CD4-positive, alpha-beta T cell (primary cell): ENCODE measurements at regions of chr15 and their contacts with region 1.

Region 1: DNA sequence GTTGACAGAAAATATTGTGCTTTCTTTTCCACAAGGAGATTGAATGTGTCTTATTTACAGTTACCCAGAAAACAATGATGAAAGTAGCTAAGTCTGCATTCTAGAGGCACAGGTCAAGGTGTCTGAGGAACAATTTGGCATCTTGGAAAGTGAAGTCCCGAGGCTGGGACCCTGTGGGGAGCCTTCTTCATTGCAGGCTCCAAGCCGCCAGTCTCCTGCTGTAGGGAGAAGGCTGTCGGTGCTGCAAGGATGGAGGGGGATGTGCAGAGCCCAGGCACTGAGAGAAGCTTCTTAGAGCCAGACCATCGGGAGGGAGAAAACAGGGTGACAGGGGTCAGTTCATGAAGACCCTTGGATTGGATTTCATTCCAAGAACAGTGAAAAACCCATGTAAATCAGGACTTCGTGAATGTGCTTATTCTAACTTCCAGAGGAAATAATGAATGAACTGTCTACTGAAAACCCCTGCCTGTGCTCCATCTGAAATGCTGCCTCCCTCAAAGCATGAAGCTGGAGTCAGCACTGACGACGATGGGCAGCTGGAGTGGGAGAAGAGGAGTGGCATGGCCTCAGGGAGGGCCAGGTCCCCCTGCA is 25.2 kb upstream of the NSMCE3 start:
- DNase-seq: no peak
- ATAC-seq: no peak
- H3K4me3 ChIP-seq: no peak overlapping the region
- H3K4me3 Mint-ChIP-seq: no peak overlapping the region
- H3K27ac ChIP-seq: no peak overlapping the region
- H3K27ac Mint-ChIP-seq: no peak overlapping the region
- H3K4me1 ChIP-seq: no peaks in the 10 kb centered on the region
- H3K4me1 Mint-ChIP-seq: no peaks in the 10 kb centered on the region
- H3K27me3 ChIP-seq: peaks cover 0 to 10% of the 10 kb centered on the region in 2 experiments
- H3K27me3 Mint-ChIP-seq: peaks cover 5% of the 10 kb centered on the region
- CTCF ChIP-seq: no peak

Region 2: DNA sequence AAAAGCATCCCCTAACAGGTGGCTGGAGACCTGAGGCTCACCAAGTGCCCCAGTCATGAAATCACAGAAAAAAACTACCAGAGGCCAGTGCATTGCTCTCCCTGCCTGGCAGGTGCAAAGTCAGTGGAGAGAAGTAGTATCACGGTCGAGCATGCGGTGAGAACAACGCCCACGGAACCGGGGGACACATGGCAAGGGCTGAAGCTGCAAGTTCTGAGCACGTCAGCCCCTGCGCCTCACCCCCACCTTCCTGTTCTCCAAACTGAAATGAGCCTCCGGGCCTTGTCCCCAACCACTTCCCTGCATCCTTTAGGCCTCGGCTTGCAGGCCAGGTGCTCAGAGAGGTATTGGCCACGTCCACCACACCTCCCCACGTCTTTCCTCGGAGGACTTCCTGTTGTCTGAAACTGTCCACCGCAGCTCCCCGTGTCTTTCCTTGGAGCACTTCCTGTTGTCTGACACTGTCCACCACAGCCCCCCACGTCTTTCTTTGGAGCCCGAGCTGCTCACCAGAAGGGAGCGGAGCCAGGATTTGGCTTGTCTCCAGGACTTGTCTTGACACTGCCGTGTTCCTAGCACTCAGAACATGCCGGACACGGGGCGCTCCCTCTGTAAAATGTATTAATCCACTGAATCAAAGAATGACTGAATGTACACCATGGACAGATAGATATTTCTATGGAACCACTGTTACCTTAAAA is 69.1 kb before region 1 on chr15:
- CTCF ChIA-PET with region 1: no interaction called
- POLR2A ChIA-PET with region 1: no interaction called
- intact Hi-C with region 1: loop called in 1 of 2 experiments (anchors 5 kb)
- DNase-seq: no peak
- ATAC-seq: no peak
- H3K4me3 ChIP-seq: no peak overlapping the region
- H3K4me3 Mint-ChIP-seq: no peak overlapping the region
- H3K27ac ChIP-seq: no peak overlapping the region
- H3K27ac Mint-ChIP-seq: no peak overlapping the region
- H3K4me1 ChIP-seq: no peaks in the 10 kb centered on the region
- H3K4me1 Mint-ChIP-seq: no peaks in the 10 kb centered on the region
- H3K27me3 ChIP-seq: peaks cover 13 to 23% of the 10 kb centered on the region in 2 experiments
- H3K27me3 Mint-ChIP-seq: peaks cover 52% of the 10 kb centered on the region
- CTCF ChIP-seq: no peak

Region 3: DNA sequence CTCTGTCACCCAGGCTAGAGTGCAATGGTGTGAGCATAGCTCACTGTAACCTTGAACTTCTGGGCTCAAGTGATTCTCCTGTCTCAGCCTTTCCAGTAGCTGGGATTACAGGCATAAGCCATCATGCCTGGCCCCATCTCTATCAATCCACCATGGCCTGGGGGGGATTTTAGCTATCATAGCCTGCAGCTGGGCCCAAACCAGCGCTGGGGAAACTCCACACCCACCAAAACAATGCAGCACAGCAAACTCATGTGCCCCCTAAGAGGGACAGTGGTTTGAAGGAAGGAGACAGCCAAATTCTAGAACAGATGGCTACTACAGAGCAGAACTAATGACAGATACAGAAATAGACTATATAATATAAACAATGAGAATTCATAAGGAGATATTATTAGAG is 11.4 kb before region 1 on chr15:
- CTCF ChIA-PET with region 1: no interaction called
- POLR2A ChIA-PET with region 1: no interaction called
- intact Hi-C with region 1: no loop called
- DNase-seq: no peak
- ATAC-seq: no peak
- H3K4me3 ChIP-seq: no peak overlapping the region
- H3K4me3 Mint-ChIP-seq: no peak overlapping the region
- H3K27ac ChIP-seq: no peak overlapping the region
- H3K27ac Mint-ChIP-seq: no peak overlapping the region
- H3K4me1 ChIP-seq: no peaks in the 10 kb centered on the region
- H3K4me1 Mint-ChIP-seq: no peaks in the 10 kb centered on the region
- H3K27me3 ChIP-seq: peaks cover 8 to 37% of the 10 kb centered on the region in 2 experiments
- H3K27me3 Mint-ChIP-seq: peaks cover 56% of the 10 kb centered on the region
- CTCF ChIP-seq: no peak